Prostate gland (tissue), 2 donors: ENCODE measurements at regions of chr1 and their contacts with region 1.

Region 1: DNA sequence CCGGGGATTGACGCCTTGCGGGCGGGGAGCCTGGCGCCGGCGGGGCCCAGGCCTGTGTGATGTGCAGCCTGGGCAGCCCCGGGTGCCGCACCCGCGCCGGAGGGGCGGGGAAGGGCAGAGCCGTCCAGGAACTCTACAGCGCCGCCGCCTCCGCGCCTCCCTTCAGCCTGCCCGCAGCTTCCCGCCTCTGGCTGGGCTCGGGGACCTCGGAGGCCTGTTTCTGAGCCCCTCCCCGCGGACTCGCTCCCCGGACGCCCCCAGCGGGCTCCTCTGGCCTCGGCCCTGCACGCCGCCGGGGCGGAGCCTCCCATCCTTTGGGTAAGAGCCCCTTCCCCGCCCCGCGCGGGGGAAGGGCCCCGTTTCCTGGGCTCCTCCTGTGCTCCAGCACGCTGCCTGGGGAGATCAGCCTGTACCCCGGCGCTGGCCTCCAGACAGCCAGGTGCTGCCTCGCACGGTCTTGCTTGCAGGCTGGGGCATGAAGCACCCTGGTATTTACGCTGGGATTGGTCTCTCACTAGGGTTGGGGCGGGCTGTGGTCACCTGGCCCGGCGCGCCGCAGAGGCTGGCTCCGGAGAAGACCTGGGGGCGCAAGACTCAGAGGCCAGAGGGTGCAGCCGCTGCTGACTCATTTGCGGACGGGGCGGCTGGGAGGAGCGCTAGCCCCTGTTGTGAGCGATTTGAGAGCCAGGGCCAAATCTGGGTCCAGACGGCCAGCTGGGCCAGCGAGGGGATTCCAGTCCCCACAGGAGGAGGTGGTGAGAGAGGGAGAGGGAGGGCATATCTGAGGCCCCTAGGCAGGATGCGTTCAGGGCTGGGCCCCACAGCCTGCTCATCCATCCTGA is 5.7 kb upstream of the ACOT11 start:
- DNase-seq: peak; percentile 83
- H3K4me3 ChIP-seq: peak overlapping the region; percentile 37 to 47
- H3K27ac ChIP-seq: peak overlapping the region; percentile 72 to 74
- H3K4me1 ChIP-seq: no peaks in the 10 kb centered on the region
- H3K27me3 ChIP-seq: no peaks in the 10 kb centered on the region
- CTCF ChIP-seq: peak in 1 of 4 experiments; percentile 46
- POLR2A ChIP-seq: peak; percentile 61

Region 2: GRCh38 chr1:54499360-54500106 is 42.8 kb before region 1 on chr1:
- intact Hi-C with region 1: loop called (anchors 5 kb)
- DNase-seq: peak; percentile 30
- H3K4me3 ChIP-seq: peak overlapping the region; percentile 15 to 35
- H3K27ac ChIP-seq: no peak overlapping the region
- H3K4me1 ChIP-seq: no peaks in the 10 kb centered on the region
- H3K27me3 ChIP-seq: no peaks in the 10 kb centered on the region
- CTCF ChIP-seq: peak in 2 of 4 experiments; percentile 44 to 56
- POLR2A ChIP-seq: no peak

Region 3: GRCh38 chr1:54645806-54646676 is 103.7 kb after region 1 on chr1:
- intact Hi-C with region 1: loop called (anchors 10 kb)
- DNase-seq: peak; percentile 8
- H3K4me3 ChIP-seq: no peak overlapping the region
- H3K27ac ChIP-seq: no peak overlapping the region
- H3K4me1 ChIP-seq: no peaks in the 10 kb centered on the region
- H3K27me3 ChIP-seq: no peaks in the 10 kb centered on the region
- CTCF ChIP-seq: no peak
- POLR2A ChIP-seq: no peak

Region 4: GRCh38 chr1:54715493-54716298 is 173.4 kb after region 1 on chr1 and contains the start of gene TTC4:
- intact Hi-C with region 1: loop called (anchors 10 kb)
- DNase-seq: peak; percentile 74
- H3K4me3 ChIP-seq: peak within 1 kb of the TSS; percentile 70 to 80
- H3K27ac ChIP-seq: peak within 1 kb of the TSS; percentile 62 to 74
- H3K4me1 ChIP-seq: no peaks in the 10 kb centered on the region
- H3K27me3 ChIP-seq: no peaks in the 10 kb centered on the region
- CTCF ChIP-seq: peak in 1 of 4 experiments; percentile 39
- POLR2A ChIP-seq: peak; percentile 83
- total RNA-seq, gene TTC4: 15.9 to 17.4 TPM